ENCODE measurements at regions of chr1 and their contacts with region 1.

Region 1: DNA sequence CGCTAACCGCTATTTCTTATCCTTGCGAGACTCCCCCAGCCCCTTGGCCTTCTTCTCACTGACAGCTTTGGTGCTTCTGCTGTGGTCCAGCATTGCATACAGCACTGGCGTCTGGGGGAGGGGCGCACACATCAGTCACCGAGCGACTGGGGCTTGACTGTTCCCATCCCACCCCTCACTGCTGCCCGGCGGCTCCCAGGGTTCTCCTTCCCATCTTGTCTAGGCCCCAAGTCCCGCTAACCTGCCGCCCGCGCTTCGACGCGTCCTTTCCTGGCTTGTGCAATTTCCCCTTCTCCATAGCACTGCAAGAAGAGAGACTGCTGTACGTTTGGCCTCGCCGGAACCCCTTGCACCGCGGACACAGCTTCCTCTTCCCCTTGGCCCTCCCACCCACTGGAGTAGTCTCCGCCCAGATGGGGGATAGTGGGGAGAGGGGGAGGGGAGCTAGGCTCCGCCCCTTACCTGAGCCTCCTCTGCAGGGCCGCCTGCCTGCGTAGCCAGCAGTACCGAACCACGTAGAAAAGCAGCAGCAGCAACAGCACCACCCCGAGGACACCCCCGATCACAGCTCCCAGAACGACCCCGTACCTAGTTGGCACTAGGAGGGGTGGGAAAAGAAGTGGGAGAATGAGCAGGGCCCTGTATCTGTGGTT is 3.8 kb downstream of the MPZ start:
- DNase-seq: peak; percentile 91 to 97 (median 95)
- ATAC-seq: peak; percentile 92
- H3K4me3 ChIP-seq: peak overlapping the region; percentile 61
- H3K27ac ChIP-seq: peak overlapping the region; percentile 70
- H3K4me1 ChIP-seq: peaks cover 28 to 33% of the 10 kb centered on the region in 2 experiments
- H3K27me3 ChIP-seq: no peaks in the 10 kb centered on the region
- CTCF ChIP-seq: peak; percentile 56 to 74 (median 61); a peak in 5 of 6 replicates
- EP300 ChIP-seq: no peak; the same call in 1 of the 2 replicates
- POLR2A ChIP-seq: peak; percentile 69
- RAD21 ChIP-seq: peak; percentile 34 to 47; a peak in 3 of 4 replicates

Region 2: DNA sequence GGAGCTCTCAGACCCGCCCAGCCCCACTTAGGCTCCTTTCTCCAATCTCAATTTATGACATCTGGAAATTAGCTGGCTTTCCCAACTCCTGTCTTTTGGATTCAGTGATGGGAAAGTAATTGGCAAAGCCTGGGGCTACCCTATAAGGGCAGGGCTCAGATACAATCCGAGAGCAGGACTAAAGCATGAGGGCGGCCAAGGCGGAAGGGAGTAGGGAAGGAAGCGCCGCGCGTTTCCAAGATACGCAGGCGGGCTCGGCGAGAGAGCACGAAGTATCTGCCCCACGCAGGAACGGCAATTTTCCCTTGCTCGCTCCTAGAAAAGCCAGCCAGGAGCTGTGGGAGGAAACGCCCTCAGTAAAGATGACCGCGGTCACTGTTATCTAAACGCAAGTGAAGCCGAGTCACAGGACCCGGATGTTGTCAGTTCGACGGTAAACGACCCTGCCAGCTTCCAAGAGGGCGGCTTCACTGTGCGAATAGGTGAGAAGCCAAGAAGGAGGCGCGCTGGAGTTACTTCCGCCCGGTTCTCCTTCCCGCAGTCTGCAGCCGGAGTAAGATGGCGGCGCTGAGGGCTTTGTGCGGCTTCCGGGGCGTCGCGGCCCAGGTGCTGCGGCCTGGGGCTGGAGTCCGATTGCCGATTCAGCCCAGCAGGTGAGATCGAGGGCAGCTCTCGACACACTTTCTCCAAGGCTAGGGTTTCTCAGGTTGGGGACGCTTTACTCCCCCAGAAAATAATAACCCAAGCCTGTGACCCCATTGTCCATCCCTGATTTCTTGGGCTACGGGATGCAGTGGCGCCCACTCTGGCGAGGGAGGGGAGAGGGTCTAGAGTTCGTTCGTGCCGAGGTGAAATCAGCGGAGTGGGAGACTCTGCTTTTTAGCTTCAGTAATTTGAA is 103.9 kb before region 1 on chr1 and contains the start of gene NDUFS2:
- CTCF ChIA-PET with region 1: no interaction called
- POLR2A ChIA-PET with region 1: no interaction called
- in situ Hi-C with region 1: no loop called
- intact Hi-C with region 1: loop called (anchors 5 kb)
- DNase-seq: peak; percentile 85 to 99 (median 88)
- ATAC-seq: peak; percentile 93
- H3K4me3 ChIP-seq: peak within 1 kb of the TSS; percentile 71
- H3K27ac ChIP-seq: peak within 1 kb of the TSS; percentile 99
- H3K4me1 ChIP-seq: peaks cover 49 to 63% of the 10 kb centered on the region in 2 experiments
- H3K27me3 ChIP-seq: no peaks in the 10 kb centered on the region
- CTCF ChIP-seq: peak in 1 of 3 experiments; percentile 35; a peak in 2 of 6 replicates
- EP300 ChIP-seq: no peak
- POLR2A ChIP-seq: peak; percentile 91
- RAD21 ChIP-seq: peak in 1 of 2 experiments; percentile 20; a peak in 1 of 4 replicates
- polyA plus RNA-seq, gene NDUFS2: 70.0 to 115 TPM

Region 3: DNA sequence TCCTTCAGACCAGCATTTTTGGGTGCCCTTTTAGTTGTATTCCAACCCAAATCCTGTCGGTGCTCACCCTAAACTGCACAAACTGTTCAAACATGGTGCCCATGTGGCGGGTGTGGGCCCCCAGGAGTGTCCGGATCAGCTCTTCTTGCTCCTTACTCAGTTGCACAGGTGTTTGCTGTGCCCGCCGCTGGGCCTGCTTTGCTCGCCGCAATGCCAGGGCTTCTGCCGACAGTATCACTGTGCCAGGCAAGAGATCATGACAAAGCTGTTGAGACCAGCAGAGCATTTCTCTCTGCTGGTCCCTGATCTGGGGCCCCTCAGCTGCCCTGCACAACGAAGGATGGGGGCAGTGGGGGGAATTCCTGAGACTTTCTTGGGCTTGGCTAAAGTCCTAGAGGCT is 72.9 kb before region 1 on chr1:
- CTCF ChIA-PET with region 1: no interaction called
- POLR2A ChIA-PET with region 1: no interaction called
- in situ Hi-C with region 1: no loop called
- intact Hi-C with region 1: no loop called
- DNase-seq: no peak
- ATAC-seq: no peak
- H3K4me3 ChIP-seq: no peak overlapping the region
- H3K27ac ChIP-seq: no peak overlapping the region
- H3K4me1 ChIP-seq: peaks cover 0 to 15% of the 10 kb centered on the region in 2 experiments; a peak in 2 of 5 replicates
- H3K27me3 ChIP-seq: no peaks in the 10 kb centered on the region
- CTCF ChIP-seq: no peak
- EP300 ChIP-seq: no peak
- POLR2A ChIP-seq: no peak
- RAD21 ChIP-seq: no peak

Region 4: GRCh38 chr1:161367684-161368400 is 61.8 kb after region 1 on chr1 and contains the start of gene CFAP126:
- CTCF ChIA-PET with region 1: no interaction called
- POLR2A ChIA-PET with region 1: no interaction called
- in situ Hi-C with region 1: no loop called
- intact Hi-C with region 1: loop called (anchors 5 kb)
- DNase-seq: peak; percentile 70 to 79 (median 76)
- ATAC-seq: peak; percentile 99
- H3K4me3 ChIP-seq: no peak within 1 kb of the TSS
- H3K27ac ChIP-seq: no peak within 1 kb of the TSS; the same call in 2 of the 3 replicates
- H3K4me1 ChIP-seq: peaks cover 2 to 3% of the 10 kb centered on the region in 2 experiments; a peak in 3 of 5 replicates
- H3K27me3 ChIP-seq: no peaks in the 10 kb centered on the region
- CTCF ChIP-seq: peak in 1 of 3 experiments; percentile 51; a peak in 1 of 6 replicates
- EP300 ChIP-seq: no peak
- POLR2A ChIP-seq: no peak
- RAD21 ChIP-seq: peak in 1 of 2 experiments; percentile 43; a peak in 3 of 4 replicates
- polyA plus RNA-seq, gene CFAP126: not detected

Measured in K562 (cell line).